Activated CD4-positive, alpha-beta memory T cell treated with anti-CD3 and anti-CD28 coated beads for 36 hours (primary cell): ENCODE measurements at regions of chr6 and their contacts with region 1.

Region 1: GRCh38 chr6:5398530-5398929 is 137.2 kb downstream of the FARS2 start:
- DNase-seq: peak; percentile 60
- H3K4me3 Mint-ChIP-seq: no peak overlapping the region
- H3K27ac Mint-ChIP-seq: no peak overlapping the region
- H3K4me1 Mint-ChIP-seq: peaks cover 35% of the 10 kb centered on the region
- H3K27me3 Mint-ChIP-seq: no peaks in the 10 kb centered on the region

Region 2: DNA sequence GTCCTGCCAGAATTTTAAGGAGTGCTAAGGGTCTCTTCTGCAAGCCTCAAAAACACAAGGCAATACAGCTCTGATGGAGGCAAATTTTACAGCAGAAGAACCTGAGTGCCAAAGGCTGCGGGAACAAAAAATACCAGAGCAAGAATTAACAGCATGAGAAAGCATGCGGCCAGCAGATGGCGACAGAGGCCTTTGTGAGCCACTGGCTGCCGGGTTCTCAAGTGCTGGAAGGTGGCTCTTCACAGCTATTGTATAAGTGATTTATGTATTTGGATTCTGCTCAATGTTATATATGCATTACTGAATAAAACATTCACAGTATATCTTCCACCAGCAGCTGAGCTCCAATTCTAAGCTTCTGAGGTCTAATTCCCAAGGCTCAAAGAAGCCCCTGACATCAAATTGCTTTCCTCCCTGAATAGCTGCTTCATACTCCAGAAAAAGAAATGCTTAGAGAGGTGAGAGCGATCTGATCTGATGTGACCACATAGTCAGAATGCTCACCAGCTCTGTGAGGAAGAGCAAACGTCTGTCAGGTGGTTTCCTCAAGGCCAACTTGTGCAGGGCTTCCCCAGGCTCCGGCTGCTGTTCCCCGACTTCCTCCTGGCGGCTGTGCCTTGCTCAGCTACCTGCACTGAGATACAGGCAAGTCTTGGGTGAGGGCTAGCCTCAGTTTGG is 254.8 kb before region 1 on chr6:
- CTCF ChIA-PET with region 1: interaction called, 41 read pairs
- POLR2A ChIA-PET with region 1: no interaction called
- intact Hi-C with region 1: loop called (anchors 1 kb)
- DNase-seq: peak; percentile 86
- H3K4me3 Mint-ChIP-seq: no peak overlapping the region
- H3K27ac Mint-ChIP-seq: no peak overlapping the region
- H3K4me1 Mint-ChIP-seq: no peaks in the 10 kb centered on the region
- H3K27me3 Mint-ChIP-seq: no peaks in the 10 kb centered on the region

Region 3: GRCh38 chr6:5201271-5201670 is 197.3 kb before region 1 on chr6:
- CTCF ChIA-PET with region 1: no interaction called
- POLR2A ChIA-PET with region 1: no interaction called
- intact Hi-C with region 1: loop called (anchors 1 kb)
- DNase-seq: no peak
- H3K4me3 Mint-ChIP-seq: no peak overlapping the region
- H3K27ac Mint-ChIP-seq: no peak overlapping the region
- H3K4me1 Mint-ChIP-seq: peaks cover 25% of the 10 kb centered on the region
- H3K27me3 Mint-ChIP-seq: no peaks in the 10 kb centered on the region

Region 4: GRCh38 chr6:5260661-5261544 is 137.6 kb before region 1 on chr6 and contains the starts of genes FARS2 and LYRM4:
- CTCF ChIA-PET with region 1: no interaction called
- POLR2A ChIA-PET with region 1: no interaction called
- intact Hi-C with region 1: loop called (anchors 1 kb)
- DNase-seq: peak; percentile 93
- H3K4me3 Mint-ChIP-seq: peak within 1 kb of the TSS; percentile 98
- H3K27ac Mint-ChIP-seq: peak within 1 kb of the TSS; percentile 99
- H3K4me1 Mint-ChIP-seq: peaks cover 36% of the 10 kb centered on the region
- H3K27me3 Mint-ChIP-seq: no peaks in the 10 kb centered on the region
- total RNA-seq, gene FARS2: 22.7 to 23.7 TPM
- total RNA-seq, gene LYRM4: 50.6 to 53.6 TPM

Region 5: DNA sequence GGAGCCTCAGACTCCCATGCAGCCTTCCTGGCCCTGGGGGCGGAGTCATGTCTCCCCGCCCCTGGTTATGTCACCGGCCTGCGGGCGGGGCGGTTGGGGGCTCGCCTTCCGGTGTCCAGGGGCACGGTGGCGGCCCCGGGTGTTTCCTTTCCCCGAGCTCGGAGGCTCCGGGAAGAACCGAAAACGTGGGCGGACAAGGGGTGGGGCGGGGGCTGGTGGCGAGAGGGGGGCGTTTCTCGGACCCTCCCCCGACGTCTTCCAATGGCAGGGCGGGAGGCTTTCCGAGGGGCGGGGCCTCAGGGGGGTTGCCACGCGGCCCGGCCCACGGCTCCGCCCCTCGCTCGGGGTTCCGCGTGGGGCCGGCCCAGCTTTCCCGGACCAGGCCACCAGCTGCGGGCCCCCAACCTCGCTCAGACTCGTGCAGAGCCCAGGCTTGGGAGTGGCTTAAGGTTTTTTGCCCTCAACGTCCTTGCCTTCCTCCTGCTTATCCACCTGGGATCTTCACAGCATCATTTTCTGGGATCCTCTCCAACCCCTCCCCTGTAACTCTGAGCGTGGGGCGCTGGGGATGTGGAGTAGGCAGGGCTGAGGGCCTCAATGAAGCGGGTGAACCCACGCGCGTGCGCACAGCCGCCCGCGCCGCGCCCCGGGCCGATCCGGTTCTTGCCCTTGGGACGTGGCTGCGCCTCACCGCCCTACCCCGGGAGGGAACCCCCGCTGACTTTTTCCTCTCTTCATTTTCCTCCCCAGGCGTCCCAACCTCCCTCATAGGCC is 610.3 kb after region 1 on chr6:
- CTCF ChIA-PET with region 1: no interaction called
- POLR2A ChIA-PET with region 1: no interaction called
- intact Hi-C with region 1: loop called (anchors 5 kb)
- DNase-seq: peak; percentile 73
- H3K4me3 Mint-ChIP-seq: peak overlapping the region; percentile 73
- H3K27ac Mint-ChIP-seq: no peak overlapping the region
- H3K4me1 Mint-ChIP-seq: peaks cover 32% of the 10 kb centered on the region
- H3K27me3 Mint-ChIP-seq: peaks cover 52% of the 10 kb centered on the region